ENCODE measurements at regions of chr5 and their contacts with region 1.

Region 1: GRCh38 chr5:82351754-82352145 is 73.6 kb upstream of the RPS23 start:
- DNase-seq: no peak
- H3K4me3 Mint-ChIP-seq: no peak overlapping the region
- H3K27ac Mint-ChIP-seq: peak overlapping the region; percentile 2
- H3K4me1 Mint-ChIP-seq: peaks cover 63% of the 10 kb centered on the region
- H3K27me3 Mint-ChIP-seq: no peaks in the 10 kb centered on the region

Region 2: DNA sequence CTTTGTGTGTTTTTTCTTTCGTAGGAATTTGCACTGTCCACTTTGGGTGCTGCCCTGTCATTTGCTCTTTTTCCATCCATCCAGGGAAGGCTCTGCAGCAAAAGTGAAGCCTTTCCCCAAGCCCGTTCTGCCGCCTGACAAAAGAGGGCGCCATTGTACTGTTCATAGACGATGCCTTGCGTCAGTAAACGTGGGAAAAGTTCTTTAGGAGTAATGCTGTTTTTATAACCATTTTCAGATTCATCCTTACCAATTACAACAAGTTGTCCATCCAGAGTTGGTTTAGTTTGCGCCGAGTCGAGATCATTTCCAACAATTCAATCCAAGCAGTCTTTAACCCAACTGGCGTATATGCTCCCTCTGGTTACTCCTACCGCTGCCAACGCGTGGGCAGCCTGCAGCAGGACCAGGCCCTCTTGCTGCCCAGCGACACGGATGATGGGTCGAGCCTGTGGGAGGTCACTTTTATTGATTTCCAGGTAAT is 39.3 kb before region 1 on chr5:
- CTCF ChIA-PET with region 1: interaction called, 22 read pairs
- DNase-seq: peak; percentile 60
- H3K4me3 Mint-ChIP-seq: no peak overlapping the region
- H3K27ac Mint-ChIP-seq: no peak overlapping the region
- H3K4me1 Mint-ChIP-seq: no peaks in the 10 kb centered on the region
- H3K27me3 Mint-ChIP-seq: no peaks in the 10 kb centered on the region

Region 3: GRCh38 chr5:82327941-82328340 is 23.8 kb before region 1 on chr5:
- CTCF ChIA-PET with region 1: interaction called, 14 read pairs
- DNase-seq: no peak
- H3K4me3 Mint-ChIP-seq: no peak overlapping the region
- H3K27ac Mint-ChIP-seq: no peak overlapping the region
- H3K4me1 Mint-ChIP-seq: no peaks in the 10 kb centered on the region
- H3K27me3 Mint-ChIP-seq: peaks cover 15% of the 10 kb centered on the region

Region 4: DNA sequence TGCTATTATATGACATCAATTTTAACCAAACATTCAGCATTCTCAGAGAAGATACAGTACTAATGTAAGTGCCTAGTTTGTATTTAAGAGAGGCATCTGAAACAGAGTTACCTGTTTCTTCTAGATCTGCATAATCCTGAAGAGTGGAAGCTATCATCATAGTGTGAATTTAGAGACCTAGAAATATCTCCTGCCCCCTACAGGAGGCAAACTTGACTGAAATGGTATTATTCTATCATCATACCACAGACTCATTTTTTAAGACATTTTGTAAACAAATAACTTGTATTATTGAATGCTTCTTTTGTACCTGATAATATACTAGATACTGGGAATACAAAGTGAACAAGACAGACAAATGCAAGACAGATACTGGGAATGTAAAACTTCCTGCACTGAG is 143.2 kb after region 1 on chr5:
- CTCF ChIA-PET with region 1: interaction called, 12 read pairs
- DNase-seq: no peak
- H3K4me3 Mint-ChIP-seq: no peak overlapping the region
- H3K27ac Mint-ChIP-seq: no peak overlapping the region
- H3K4me1 Mint-ChIP-seq: no peaks in the 10 kb centered on the region
- H3K27me3 Mint-ChIP-seq: peaks cover 12% of the 10 kb centered on the region

Region 5: GRCh38 chr5:82641331-82642003 is 289.7 kb after region 1 on chr5:
- CTCF ChIA-PET with region 1: interaction called, 24 read pairs
- DNase-seq: no peak
- H3K4me3 Mint-ChIP-seq: no peak overlapping the region
- H3K27ac Mint-ChIP-seq: no peak overlapping the region
- H3K4me1 Mint-ChIP-seq: peaks cover 10% of the 10 kb centered on the region
- H3K27me3 Mint-ChIP-seq: peaks cover 3% of the 10 kb centered on the region

Measured in activated naive CD4-positive, alpha-beta T cell treated with anti-CD3 and anti-CD28 coated beads, Interleukin-2, amount 10 ng/mL, durations not matched to agents 7 days and 5 days (primary cell).